ENCODE measurements at regions of chr1 and their contacts with region 1.

Region 1: GRCh38 chr1:201468844-201469511 is at the start of gene PHLDA3:
- H3K4me3 ChIP-seq: peak within 1 kb of the TSS; percentile 71
- H3K27ac ChIP-seq: peak within 1 kb of the TSS; percentile 99
- H3K4me1 ChIP-seq: no peaks in the 10 kb centered on the region; the same call in 1 of the 2 replicates
- CTCF ChIP-seq: no peak

Region 2: GRCh38 chr1:201447911-201448871 is 20.8 kb before region 1 on chr1:
- CTCF ChIA-PET with region 1: interaction called, 44 read pairs
- POLR2A ChIA-PET with region 1: interaction called, 10 read pairs
- H3K4me3 ChIP-seq: no peak overlapping the region
- H3K27ac ChIP-seq: no peak overlapping the region
- H3K4me1 ChIP-seq: 0 out of 2 replicates have a peak, but pooled peaks cover 6% of the 10 kb centered on the region
- CTCF ChIP-seq: peak; percentile 66

Region 3: DNA sequence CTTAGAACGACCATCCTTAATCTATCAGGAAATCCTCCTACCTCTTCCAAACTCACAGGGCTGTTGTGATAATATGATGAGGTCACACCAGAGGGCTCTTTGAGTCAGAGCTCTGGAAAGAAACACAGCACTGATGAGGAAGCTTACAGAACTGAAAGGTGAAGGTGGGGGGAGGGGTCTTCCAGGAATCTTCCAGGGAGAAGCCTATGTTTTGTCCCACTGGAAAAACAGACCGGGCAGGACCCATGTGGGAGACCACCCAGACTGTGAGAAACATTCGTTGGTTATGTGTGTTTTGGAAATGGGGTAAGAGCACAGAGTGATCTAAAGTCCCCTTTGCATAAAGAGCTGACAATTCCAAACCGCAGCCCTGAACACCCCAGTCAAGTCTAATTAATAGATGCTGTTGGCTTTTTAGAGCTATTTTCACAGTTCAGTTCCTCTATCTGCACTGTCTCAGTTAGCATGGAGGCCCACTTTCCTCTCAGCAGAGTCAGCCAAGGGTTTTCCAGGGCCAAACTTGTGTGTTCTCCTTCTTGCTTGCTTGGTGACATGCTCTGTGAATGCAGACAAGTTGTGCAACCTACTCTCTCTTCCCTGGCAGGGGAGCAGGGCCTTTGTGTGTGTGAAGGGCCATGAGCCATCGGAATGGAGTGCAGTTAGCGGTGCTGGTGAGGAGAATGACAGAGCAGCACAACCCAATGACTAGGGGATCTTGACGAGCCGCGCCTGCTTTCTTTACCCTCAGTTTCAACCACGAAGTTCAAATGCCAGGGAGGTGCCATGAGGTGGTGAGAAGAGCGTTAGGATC is 12.3 kb before region 1 on chr1:
- CTCF ChIA-PET with region 1: interaction called, 5 read pairs
- POLR2A ChIA-PET with region 1: interaction called, 17 read pairs
- H3K4me3 ChIP-seq: no peak overlapping the region
- H3K27ac ChIP-seq: no peak overlapping the region; the same call in 1 of the 2 replicates
- H3K4me1 ChIP-seq: peaks cover 11% of the 10 kb centered on the region
- CTCF ChIP-seq: no peak

Measured in HEK293 (cell line).